ENCODE measurements at regions of chr20 and their contacts with region 1.

Region 1: GRCh38 chr20:50165684-50166554 is 12.4 kb upstream of the PEDS1 start:
- DNase-seq: peak; percentile 91
- H3K4me3 ChIP-seq: peak overlapping the region in 4 of 8 donors; percentile 10 to 59 (median 18)
- H3K27ac ChIP-seq: peak overlapping the region; percentile 56 to 85 (median 76)
- H3K4me1 ChIP-seq: peaks cover 0 to 30% (median 18%) of the 10 kb centered on the region in 6 donors
- H3K27me3 ChIP-seq: peaks cover 0 to 1% (median 0%) of the 10 kb centered on the region in 7 donors
- CTCF ChIP-seq: no peak
- POLR2A ChIP-seq: no peak

Region 2: DNA sequence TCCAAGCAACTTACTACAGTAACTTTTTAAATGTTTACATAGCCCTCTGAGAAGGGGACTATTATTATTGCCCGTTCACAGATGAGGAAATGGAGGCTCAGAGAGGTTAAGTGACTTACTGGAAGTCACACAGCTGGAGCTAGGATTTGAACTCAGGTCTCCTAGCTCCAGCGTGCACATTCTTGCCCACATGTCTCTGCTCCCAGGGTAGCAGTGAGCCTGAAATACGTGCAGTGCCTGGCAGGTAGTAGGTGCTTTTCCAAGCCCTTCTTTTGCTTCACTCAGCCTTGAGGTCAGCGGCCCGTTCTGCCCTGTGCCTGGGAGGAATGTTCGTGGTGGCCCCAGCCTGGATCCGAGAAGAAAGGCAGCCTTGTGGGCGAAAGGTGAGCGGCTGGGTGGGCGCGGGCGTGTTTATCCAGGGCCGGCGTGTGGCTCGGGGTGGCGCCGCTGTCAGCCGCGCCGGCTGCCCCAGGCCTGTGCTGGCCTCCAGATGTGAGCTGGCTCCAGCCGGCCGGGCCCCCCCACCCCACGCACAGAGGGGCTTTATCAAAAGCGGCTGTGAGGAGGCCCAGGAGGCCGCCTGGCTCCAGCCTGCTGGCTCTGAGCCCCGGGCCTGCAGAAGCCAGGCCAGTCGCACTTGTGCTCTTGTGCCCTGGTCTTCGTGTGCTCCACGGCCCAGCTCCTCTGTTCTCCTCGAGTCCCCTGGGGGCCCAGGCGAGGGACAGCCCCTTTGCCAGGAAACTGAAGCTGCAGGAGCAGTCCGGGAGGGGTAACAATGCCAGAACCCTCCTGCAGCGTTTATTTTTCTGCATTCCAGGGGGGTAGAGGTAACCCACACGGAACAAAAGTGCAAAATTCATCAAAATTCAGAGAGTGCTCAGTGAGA is 111.0 kb before region 1 on chr20:
- intact Hi-C with region 1: no loop called
- DNase-seq: no peak
- H3K4me3 ChIP-seq: no peak overlapping the region
- H3K27ac ChIP-seq: peak overlapping the region in 1 of 8 donors; percentile 3
- H3K4me1 ChIP-seq: peaks cover 0 to 47% (median 23%) of the 10 kb centered on the region in 6 donors
- H3K27me3 ChIP-seq: no peaks in the 10 kb centered on the region
- CTCF ChIP-seq: no peak
- POLR2A ChIP-seq: no peak

Region 3: DNA sequence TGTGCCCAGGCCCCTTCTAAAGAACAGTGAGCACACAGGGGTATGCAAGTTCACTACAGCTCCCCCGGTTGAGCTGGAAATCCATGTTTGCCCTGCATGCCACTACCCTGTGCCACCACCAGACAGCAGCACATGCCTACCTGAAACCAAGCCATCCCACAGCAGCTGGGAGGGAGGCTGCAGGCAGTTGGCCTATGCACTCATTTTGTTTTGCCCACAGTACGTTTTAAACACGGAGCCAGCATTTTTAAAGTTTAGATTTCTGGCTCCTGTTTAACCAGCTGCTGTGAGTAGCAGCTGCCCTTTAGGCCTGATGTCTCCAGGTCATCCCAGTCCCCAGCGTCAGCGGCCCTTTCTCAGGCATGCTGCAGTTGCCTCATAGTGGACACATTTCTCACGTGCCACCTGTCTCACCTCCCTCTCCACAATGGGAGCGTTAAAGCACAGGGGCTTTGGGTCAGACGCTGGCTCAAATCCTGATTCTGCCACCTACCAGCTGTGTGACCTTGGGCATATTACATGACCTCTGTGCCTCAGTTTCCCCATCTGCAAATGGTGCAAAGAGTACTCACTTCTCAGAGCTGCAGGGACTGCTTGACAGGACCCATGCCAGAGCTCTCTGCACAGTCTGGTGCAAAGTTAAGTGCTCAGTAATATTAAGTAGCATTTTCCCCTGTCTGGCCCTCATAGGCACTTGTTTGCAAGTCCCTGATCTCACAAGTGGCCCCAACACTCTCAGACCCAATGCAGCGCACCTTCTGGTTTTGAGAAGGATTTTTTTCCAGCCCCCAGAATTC is 44.8 kb before region 1 on chr20:
- intact Hi-C with region 1: loop called (anchors 5 kb)
- DNase-seq: peak; percentile 87
- H3K4me3 ChIP-seq: no peak overlapping the region
- H3K27ac ChIP-seq: no peak overlapping the region
- H3K4me1 ChIP-seq: peaks cover 0 to 27% (median 8%) of the 10 kb centered on the region in 6 donors
- H3K27me3 ChIP-seq: no peaks in the 10 kb centered on the region
- CTCF ChIP-seq: peak; percentile 63 to 92 (median 82)
- POLR2A ChIP-seq: no peak